ENCODE measurements at regions of chr20 and their contacts with region 1.

Region 1: DNA sequence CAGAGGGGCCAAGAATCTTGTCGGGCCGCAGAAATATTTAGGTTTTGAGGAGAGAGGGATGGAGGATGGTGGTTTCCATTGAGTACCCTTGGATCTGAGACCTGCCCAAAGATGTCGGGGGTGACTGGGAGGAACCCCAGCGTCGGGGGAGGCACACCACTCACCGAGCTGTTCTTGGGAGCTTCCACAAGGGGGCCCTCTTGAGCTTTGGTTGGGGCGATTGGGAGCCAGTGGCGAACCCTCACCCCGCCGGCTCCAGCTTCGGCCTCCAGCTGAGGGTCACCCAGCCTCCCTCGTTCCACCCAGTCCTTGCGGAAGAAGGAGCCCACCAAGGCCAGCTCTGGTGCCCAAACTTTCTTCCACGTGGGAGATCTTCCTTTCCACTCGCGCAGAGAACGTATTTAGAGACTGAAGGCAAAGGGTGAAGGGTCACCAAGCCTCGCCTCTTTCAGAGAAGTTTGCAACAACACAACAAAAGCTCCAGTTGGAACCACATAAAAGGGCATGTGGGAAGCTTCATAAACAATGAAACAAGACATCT is 33.6 kb downstream of the APCDD1L start:
- DNase-seq: peak; percentile 36 to 96
- H3K4me3 ChIP-seq: peak overlapping the region in 1 of 4 experiments; percentile 30; a peak in 1 of 8 replicates
- H3K27ac ChIP-seq: no peak overlapping the region
- H3K4me1 ChIP-seq: peaks cover 0 to 4% (median 3%) of the 10 kb centered on the region in 4 experiments; a peak in 5 of 7 replicates
- H3K27me3 ChIP-seq: no peaks in the 10 kb centered on the region; a peak in 1 of 7 replicates
- CTCF ChIP-seq: peak; percentile 75 to 86 (median 83)
- EP300 ChIP-seq: no peak
- POLR2A ChIP-seq: no peak
- RAD21 ChIP-seq: peak; percentile 97 to 98

Region 2: DNA sequence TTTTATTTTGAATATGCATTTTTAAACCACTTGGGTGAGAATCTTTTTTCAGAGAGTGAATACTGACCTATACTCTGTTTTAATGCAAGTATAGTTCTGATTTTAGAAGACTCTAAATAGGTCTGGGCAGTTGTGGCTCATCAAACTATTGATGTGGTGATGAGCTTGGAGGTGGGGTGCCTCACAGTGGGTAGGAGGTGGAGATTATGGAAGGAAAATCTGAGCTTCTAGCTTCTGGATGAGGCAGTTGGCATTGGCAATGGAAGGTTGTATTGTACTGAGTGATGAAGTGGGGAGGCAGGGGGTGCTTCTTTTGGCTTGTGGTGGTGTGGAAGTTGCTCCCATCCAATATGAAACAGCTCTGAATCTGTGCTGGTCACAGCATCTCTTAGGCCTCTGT is 39.8 kb before region 1 on chr20:
- CTCF ChIA-PET with region 1: no interaction called
- POLR2A ChIA-PET with region 1: no interaction called
- DNase-seq: no peak
- H3K4me3 ChIP-seq: no peak overlapping the region
- H3K27ac ChIP-seq: no peak overlapping the region
- H3K4me1 ChIP-seq: peaks cover 0 to 14% (median 10%) of the 10 kb centered on the region in 4 experiments; a peak in 4 of 7 replicates
- H3K27me3 ChIP-seq: no peaks in the 10 kb centered on the region
- CTCF ChIP-seq: no peak
- EP300 ChIP-seq: no peak
- POLR2A ChIP-seq: no peak
- RAD21 ChIP-seq: no peak

Region 3: DNA sequence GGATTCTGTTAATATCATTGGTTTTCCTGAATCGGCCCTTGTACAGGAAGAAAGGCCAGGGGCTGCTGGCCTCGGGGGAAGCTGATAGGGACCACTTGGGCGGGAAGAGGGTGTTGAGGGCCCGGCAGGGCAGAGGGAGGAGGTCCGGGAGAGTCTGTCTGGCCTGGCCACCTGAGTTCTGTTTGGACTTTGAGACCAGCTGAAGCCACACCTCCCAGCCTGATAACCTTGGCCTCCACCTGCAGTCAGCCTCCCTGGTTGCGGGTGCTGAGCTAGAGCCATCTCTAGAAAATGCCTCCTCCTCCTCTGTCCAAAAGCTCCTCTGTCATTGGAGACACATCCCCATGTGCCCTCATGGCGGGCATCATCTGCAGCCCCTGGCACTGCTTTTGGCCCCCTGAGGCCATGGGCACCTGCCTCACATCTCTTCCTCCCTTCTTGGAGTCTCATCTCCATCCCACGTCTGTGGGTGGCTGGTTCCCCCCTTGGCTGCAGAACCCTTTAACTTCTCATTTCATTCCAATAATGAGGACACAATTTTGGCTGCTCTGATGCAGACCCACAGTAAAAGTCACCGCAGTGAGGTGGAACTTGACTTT is 17.0 kb after region 1 on chr20:
- CTCF ChIA-PET with region 1: interaction called, 20 read pairs
- POLR2A ChIA-PET with region 1: no interaction called
- DNase-seq: no peak
- H3K4me3 ChIP-seq: no peak overlapping the region
- H3K27ac ChIP-seq: no peak overlapping the region
- H3K4me1 ChIP-seq: no peaks in the 10 kb centered on the region
- H3K27me3 ChIP-seq: no peaks in the 10 kb centered on the region
- CTCF ChIP-seq: no peak
- EP300 ChIP-seq: no peak
- POLR2A ChIP-seq: no peak
- RAD21 ChIP-seq: no peak

Region 4: GRCh38 chr20:58618351-58619076 is 137.0 kb after region 1 on chr20:
- CTCF ChIA-PET with region 1: interaction called, 12 read pairs
- POLR2A ChIA-PET with region 1: interaction called, 19 read pairs
- DNase-seq: no peak
- H3K4me3 ChIP-seq: no peak overlapping the region
- H3K27ac ChIP-seq: no peak overlapping the region
- H3K4me1 ChIP-seq: peaks cover 0 to 9% (median 5%) of the 10 kb centered on the region in 4 experiments; a peak in 5 of 7 replicates
- H3K27me3 ChIP-seq: peaks cover 0 to 13% (median 7%) of the 10 kb centered on the region in 4 experiments; a peak in 4 of 7 replicates
- CTCF ChIP-seq: no peak
- EP300 ChIP-seq: no peak
- POLR2A ChIP-seq: no peak
- RAD21 ChIP-seq: no peak

Region 5: GRCh38 chr20:58818585-58819285 is 337.2 kb after region 1 on chr20:
- CTCF ChIA-PET with region 1: interaction called, 13 read pairs
- POLR2A ChIA-PET with region 1: no interaction called
- DNase-seq: no peak
- H3K4me3 ChIP-seq: no peak overlapping the region
- H3K27ac ChIP-seq: no peak overlapping the region
- H3K4me1 ChIP-seq: 0 out of 7 replicates have a peak, but pooled peaks cover 0 to 2% (median 0%) of the 10 kb centered on the region in 4 experiments
- H3K27me3 ChIP-seq: no peaks in the 10 kb centered on the region
- CTCF ChIP-seq: no peak
- EP300 ChIP-seq: no peak
- POLR2A ChIP-seq: no peak
- RAD21 ChIP-seq: no peak

Measured in H1 (cell line).